ENCODE measurements at regions of chr5 and their contacts with region 1.

Region 1: DNA sequence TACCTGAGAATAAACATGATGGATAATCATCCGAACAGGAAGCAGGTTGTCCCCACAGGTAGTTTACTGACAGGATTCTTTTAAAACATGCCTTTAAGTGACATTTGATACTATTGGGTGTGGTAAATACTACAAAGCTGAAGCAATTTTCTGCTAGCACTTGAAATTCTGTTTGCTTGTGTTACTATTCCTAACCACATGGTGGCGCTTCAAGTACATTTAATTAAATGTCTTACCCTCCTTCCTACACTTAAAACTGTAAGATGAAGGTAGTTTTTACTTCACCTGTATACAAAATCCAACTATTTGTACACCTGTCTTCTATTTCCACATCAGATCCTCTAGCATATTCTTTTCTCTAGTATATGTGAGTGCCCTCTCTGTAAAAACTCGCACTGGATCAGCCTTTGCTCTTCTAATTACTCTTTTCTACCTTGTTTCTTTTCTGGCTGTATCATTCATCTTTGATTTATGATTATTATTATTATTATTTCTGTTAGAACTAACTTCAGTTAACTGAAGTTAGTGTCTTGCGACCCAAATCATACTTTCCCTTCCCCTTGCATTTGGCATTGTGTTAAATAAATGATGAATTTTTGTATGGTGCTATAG is 18.4 kb downstream of the SLC25A46 start:
- DNase-seq: no peak
- CTCF ChIP-seq: peak; percentile 65

Region 2: DNA sequence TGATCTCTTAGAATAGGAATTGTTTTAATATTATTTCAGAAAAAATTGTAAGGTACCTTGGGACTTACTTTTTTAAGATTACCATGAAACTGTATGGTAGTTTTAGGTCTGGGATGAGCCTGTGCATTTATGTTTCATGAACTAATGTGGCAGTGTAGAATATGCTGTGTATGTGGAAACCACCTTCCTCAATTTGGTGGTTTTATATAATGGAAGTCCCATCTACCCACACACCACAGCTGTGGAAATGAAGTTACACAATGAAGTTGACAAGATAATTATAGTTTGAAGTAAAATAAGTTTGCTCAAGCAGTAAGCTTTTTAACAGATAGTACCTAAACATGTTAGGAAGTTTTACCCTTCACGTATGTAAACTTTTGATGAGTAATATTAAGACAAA is 359.3 kb after region 1 on chr5:
- in situ Hi-C with region 1: loop called (anchors 25 kb)
- DNase-seq: no peak
- CTCF ChIP-seq: no peak

Region 3: DNA sequence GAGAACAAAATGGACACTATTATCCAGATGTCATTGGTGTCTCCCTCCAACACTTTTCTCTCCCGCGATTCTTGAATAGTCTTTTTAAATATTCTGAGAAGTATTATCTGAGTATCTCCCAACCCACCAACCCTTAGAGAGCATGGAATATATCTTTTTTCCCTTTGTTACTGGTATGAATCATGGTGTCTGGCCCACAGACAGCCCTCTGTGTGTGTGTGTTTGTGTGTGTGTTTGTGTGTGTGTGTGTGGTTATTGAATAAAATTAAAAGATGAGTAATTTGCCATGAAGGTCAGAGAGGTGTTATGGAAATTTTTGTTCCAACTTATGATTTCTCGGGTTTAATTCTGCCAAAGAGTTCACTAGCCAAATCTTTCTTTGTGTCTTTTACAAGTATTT is 514.7 kb after region 1 on chr5:
- in situ Hi-C with region 1: no loop called
- DNase-seq: no peak
- CTCF ChIP-seq: no peak

Measured in GM13977 (cell line).